BJ (cell line): ENCODE measurements at regions of chr19 and their contacts with region 1.

Region 1: DNA sequence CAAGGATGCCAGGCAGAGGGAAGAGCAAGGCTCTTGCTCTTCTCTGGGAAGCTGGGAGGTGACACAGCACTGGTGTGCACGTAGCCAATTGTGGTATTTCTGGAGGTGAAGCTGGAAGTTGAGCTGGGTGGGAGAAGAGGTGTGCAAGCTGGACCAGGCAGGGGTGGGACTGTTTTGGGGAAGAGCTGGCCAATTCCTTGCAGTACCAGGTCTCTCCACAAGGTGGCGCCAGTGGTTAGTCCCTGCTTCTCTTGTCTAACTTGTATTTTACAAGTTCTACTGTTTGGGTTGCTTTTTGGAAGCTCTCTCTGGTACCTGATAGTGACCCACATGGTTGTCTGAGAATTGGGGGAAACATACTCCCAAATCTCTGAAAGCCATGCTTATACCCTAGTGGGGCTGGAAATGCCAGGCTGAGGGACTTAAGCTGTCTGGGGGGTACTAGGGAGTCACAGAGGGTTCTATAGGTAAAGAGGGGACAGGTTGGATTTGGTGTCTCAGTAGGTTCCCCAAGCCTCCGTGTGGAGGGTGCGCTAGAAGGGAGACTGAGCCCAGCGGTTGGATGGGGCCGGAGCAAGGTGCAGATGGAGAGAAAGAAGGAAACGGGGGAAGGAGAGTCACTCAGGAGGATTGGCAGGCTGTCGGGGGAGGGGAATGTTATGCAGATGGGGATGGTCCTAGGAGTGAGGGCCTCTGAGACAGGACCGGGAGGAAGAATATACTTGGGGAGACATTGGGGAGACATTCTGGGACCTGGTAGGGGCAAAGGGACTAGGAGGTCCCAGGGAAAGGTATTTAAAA is 3.0 kb downstream of the HPN start:
- DNase-seq: no peak
- H3K4me3 ChIP-seq: no peak overlapping the region
- H3K27me3 ChIP-seq: peaks cover 2% of the 10 kb centered on the region; the same call in 1 of the 2 replicates
- CTCF ChIP-seq: peak; percentile 96

Region 2: GRCh38 chr19:34963573-34964409 is 80.7 kb before region 1 on chr19 and contains the start of gene ZNF792:
- CTCF ChIA-PET with region 1: interaction called, 12 read pairs
- POLR2A ChIA-PET with region 1: no interaction called
- DNase-seq: no peak
- H3K4me3 ChIP-seq: peak within 1 kb of the TSS; percentile 94
- H3K27me3 ChIP-seq: no peaks in the 10 kb centered on the region
- CTCF ChIP-seq: no peak
- polyA plus RNA-seq, gene ZNF792: 1.7 and 1.8 TPM in 2 replicates

Region 3: DNA sequence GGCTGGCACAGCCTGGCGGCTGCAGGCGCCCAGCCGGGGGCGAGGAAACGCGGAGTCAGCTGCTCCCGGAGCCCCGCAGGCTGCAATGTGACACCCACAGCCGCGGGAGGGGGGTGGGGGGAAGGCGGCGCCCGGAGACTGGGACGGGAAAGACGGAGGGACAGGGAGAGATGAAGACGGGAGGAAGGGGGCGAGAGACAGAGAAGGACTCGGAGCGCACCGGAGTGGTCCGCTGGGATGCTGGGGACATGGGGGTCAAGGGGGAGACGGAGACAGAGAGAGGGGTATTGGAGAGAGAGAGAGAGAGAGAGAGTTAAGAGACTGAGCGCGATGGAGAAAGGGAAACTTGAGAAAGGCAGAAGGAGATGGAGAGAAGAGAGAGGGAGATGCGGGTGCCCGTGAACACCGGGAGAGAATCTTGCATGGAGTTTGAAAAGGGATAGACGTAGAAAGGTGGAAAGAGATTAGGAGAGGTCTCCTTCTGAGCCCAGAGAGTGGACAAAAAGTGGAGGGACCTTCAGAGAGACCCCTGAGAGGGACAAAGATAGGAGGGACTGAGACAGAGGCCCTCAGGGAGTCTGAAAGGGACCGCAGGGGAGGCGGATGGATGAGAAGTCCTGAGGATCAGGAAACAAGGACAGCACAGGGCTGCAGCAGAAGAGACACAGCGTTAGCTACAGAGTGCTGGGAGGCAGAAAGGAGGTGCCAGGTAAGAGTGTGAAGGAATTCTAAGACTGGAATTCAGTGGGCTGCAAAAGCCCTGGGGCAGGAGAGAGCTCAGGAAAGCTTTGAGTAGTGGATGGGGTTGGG is 13.2 kb before region 1 on chr19:
- CTCF ChIA-PET with region 1: interaction called, 26 read pairs
- POLR2A ChIA-PET with region 1: no interaction called
- DNase-seq: no peak
- H3K4me3 ChIP-seq: peak overlapping the region; percentile 59
- H3K27me3 ChIP-seq: no peaks in the 10 kb centered on the region
- CTCF ChIP-seq: no peak

Region 4: DNA sequence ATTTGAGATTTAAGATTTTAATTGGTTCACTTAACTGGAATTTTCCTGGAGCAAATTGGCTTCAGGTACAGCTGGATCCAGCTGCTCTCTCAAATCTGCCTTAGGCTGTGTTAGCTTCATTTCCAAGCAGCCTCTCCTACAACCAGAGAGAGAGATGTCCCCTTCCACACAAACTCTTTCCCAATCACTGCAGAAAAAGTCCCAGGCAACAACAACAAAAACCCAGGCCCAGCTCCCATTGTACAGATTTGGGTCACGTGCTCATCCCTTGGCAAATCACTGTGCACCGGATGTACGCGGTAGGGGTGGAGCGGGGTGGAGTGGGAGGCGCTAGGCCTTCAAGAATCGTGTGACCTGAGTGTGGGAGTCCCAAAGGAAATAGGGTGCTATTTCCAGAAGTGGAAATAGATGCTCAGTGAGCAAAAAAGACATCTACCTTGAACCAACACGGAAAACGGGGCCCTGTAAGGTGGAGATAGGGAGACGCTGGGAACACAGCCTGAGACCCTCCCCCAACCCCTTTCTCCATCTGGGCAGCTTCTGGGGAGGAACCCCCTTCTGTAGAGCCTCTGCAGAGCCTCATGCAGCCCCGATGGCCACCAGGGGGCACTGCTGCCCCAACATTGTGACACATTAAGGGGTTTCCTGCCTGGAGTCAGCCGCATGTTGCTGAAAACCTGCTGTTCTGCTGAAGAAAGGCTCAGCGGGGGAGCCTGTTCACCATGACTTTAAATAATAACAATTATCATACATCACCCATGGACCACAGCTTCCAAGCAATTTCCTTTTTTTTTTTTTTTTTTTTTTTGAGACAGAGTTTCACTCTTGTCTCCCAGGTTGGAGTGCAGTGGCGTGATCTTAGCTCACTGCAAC is 22.4 kb after region 1 on chr19:
- CTCF ChIA-PET with region 1: interaction called, 31 read pairs
- POLR2A ChIA-PET with region 1: no interaction called
- DNase-seq: no peak
- H3K4me3 ChIP-seq: no peak overlapping the region
- H3K27me3 ChIP-seq: no peaks in the 10 kb centered on the region
- CTCF ChIP-seq: peak; percentile 94

Region 5: GRCh38 chr19:35090506-35091237 is 46.2 kb after region 1 on chr19:
- CTCF ChIA-PET with region 1: interaction called, 29 read pairs
- POLR2A ChIA-PET with region 1: no interaction called
- DNase-seq: no peak
- H3K4me3 ChIP-seq: no peak overlapping the region
- H3K27me3 ChIP-seq: no peaks in the 10 kb centered on the region
- CTCF ChIP-seq: peak; percentile 69

Region 6: GRCh38 chr19:35140962-35141637 is 96.6 kb after region 1 on chr19:
- CTCF ChIA-PET with region 1: interaction called, 22 read pairs
- POLR2A ChIA-PET with region 1: no interaction called
- DNase-seq: no peak
- H3K4me3 ChIP-seq: no peak overlapping the region
- H3K27me3 ChIP-seq: peaks cover 2% of the 10 kb centered on the region
- CTCF ChIP-seq: peak; percentile 72

Region 7: GRCh38 chr19:35236638-35237400 is 192.3 kb after region 1 on chr19:
- CTCF ChIA-PET with region 1: no interaction called
- POLR2A ChIA-PET with region 1: no interaction called
- DNase-seq: no peak
- H3K4me3 ChIP-seq: no peak overlapping the region
- H3K27me3 ChIP-seq: peaks cover 4% of the 10 kb centered on the region
- CTCF ChIP-seq: no peak